BJ (cell line): ENCODE measurements at regions of chr7 and their contacts with region 1.

Region 1: GRCh38 chr7:5677538-5678294 is 103.7 kb downstream of the RNF216 start:
- DNase-seq: no peak
- H3K4me3 ChIP-seq: no peak overlapping the region
- H3K27me3 ChIP-seq: no peaks in the 10 kb centered on the region
- CTCF ChIP-seq: peak; percentile 84

Region 2: GRCh38 chr7:5646852-5647251 is 30.9 kb before region 1 on chr7:
- CTCF ChIA-PET with region 1: no interaction called
- POLR2A ChIA-PET with region 1: no interaction called
- DNase-seq: no peak
- H3K4me3 ChIP-seq: no peak overlapping the region
- H3K27me3 ChIP-seq: no peaks in the 10 kb centered on the region
- CTCF ChIP-seq: no peak

Region 3: DNA sequence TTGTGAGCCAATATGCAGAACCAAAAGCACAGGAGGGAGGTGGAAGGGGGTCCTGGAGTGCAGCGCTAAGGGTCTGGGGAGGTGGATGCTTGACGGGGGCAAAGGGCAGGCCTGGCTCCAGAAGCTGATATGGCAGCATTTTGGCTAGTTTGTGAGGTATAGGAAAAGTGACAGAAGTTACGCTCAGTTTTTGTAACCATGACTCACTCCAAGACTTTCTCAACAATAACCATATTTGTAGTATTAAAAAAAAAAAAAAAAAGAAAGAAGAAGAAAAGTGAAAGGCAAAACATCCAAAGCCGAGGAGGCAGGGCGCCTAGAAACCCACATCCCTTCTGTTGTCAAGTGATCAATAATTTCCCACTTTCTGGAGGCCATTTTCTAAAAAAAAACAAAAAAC is 11.4 kb after region 1 on chr7:
- CTCF ChIA-PET with region 1: interaction called, 12 read pairs
- POLR2A ChIA-PET with region 1: interaction called, 6 read pairs
- DNase-seq: no peak
- H3K4me3 ChIP-seq: no peak overlapping the region
- H3K27me3 ChIP-seq: no peaks in the 10 kb centered on the region
- CTCF ChIP-seq: no peak

Region 4: GRCh38 chr7:5694912-5695726 is 17.4 kb after region 1 on chr7:
- CTCF ChIA-PET with region 1: interaction called, 11 read pairs
- POLR2A ChIA-PET with region 1: interaction called, 6 read pairs
- DNase-seq: peak; percentile 53
- H3K4me3 ChIP-seq: peak overlapping the region; percentile 19
- H3K27me3 ChIP-seq: no peaks in the 10 kb centered on the region
- CTCF ChIP-seq: no peak

Region 5: DNA sequence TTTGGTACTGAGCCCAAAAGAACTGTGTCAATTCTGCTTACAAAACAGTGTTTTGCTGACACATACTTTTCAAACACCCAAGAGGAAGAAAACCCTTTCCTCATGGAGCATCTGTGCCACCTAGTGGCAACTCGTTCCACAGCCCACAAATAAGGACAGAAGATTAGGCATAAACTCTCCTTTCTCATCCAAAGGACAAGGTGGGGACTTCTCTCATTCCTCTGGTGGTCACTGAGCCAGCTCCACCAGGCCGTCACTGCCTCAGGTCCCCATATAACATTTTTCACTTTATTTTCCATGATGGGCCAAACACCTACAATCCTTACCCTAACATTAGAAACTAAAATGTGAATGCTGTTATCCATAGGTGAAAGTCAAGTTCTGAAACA is 26.8 kb after region 1 on chr7:
- CTCF ChIA-PET with region 1: interaction called, 13 read pairs
- POLR2A ChIA-PET with region 1: no interaction called
- DNase-seq: peak; percentile 41
- H3K4me3 ChIP-seq: no peak overlapping the region
- H3K27me3 ChIP-seq: no peaks in the 10 kb centered on the region
- CTCF ChIP-seq: peak; percentile 91